Activated T-helper 2 cell treated with anti-CD3 and anti-CD28 coated beads, Interferon-gamma antibody, Interleukin-2, Interleukin-4, amounts not matched to agents 10 μg/mL and 5 μg/mL and 100 μg/mL, durations not matched to agents 14 hours and 24 hours and 36 hours (primary cell): ENCODE measurements at regions of chr9 and their contacts with region 1.

Region 1: GRCh38 chr9:37422289-37423104 is at the start of gene GRHPR:
- DNase-seq: peak; percentile 84
- H3K4me3 Mint-ChIP-seq: peak within 1 kb of the TSS; percentile 96
- H3K27ac Mint-ChIP-seq: peak within 1 kb of the TSS; percentile 96
- H3K4me1 Mint-ChIP-seq: peaks cover 12% of the 10 kb centered on the region
- H3K27me3 Mint-ChIP-seq: no peaks in the 10 kb centered on the region
- total RNA-seq, gene GRHPR: 75.4 and 77.4 TPM in 2 replicates

Region 2: DNA sequence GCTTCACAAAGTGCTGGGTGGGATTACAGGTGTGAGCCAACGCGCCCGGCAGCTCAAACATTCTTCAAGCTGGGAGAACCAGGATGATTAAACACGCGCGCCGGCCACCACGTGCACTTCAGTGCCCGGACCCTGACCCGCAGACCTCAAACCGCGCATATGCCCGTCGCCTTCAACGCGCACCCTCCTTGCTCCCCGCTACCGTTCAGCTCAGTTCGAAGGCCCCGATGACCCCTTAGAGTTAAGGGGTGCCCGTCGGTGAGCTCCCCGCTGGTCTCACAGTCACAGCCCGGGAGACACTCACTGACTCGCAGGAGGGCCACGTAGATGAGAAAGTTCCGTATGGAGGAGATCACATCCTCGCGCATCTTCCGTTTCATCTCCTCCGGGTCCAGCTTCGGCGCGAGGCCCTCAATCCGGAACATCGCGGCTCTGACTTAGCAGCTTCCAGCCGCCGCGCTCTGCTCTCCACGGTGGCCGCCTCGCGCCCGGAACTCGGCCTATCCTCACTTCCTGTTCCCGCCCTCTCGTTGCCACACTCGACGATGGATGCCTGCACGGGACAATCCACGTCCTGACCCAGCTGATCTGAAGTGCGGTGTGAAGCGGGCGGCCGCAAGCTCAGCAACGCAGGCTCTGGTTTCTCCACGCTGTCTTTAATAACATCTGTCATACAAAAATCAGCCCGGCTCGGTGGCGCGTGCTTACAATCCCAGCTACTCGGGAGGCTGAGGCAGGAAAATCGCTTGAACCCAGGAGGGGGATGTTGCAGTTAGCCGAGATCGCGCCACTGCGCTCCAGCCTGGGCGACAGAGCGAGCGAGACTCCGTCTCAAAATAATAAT is 169.8 kb after region 1 on chr9 and contains the start of gene TOMM5:
- intact Hi-C with region 1: loop called (anchors 5 kb)
- DNase-seq: peak; percentile 89
- H3K4me3 Mint-ChIP-seq: peak within 1 kb of the TSS; percentile 98
- H3K27ac Mint-ChIP-seq: peak within 1 kb of the TSS; percentile 97
- H3K4me1 Mint-ChIP-seq: peaks cover 22% of the 10 kb centered on the region
- H3K27me3 Mint-ChIP-seq: peaks cover 16% of the 10 kb centered on the region
- total RNA-seq, gene TOMM5: 153 and 155 TPM in 2 replicates